Activated naive CD4-positive, alpha-beta T cell treated with anti-CD3 and anti-CD28 coated beads, Interleukin-2, amount 10 ng/mL, durations not matched to agents 7 days and 5 days (primary cell): ENCODE measurements at regions of chr14 and their contacts with region 1.

Region 1: DNA sequence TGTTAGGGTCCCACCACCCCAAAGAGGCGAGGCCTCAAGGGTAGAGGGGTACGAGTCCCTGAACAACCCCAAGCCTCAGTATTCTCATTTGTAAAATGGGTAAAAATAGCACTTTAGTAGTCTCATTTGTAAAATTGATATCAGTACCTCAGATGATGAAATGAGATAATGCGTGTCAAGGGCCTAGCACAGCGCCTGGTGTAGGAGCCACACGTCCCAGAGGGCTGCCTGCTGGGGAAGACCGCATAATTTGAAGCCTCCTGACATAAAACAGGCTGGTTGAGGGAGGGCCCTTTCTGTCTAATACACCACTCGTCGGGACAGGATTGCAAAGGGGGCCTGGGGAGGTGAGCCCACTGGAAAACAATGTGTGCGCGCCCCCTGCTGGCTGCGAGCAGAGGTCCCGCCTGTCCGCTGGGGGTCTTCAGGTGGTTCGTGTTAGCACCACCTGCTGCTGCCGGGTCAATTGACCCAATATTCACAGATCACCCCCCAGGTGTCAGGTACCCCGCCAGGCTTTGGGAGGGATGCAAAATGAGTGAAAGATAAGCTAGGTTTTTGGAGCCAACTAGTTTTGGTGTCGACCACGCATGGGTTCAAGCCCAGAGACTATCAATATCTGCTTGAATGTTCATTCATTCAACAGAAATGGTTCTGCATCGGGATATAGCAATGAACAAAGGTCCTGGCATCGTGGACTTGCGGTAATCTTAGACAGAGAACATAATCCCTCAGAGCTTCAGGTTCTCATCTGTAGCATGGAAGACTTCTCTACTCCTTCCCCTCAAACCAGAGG is 24.7 kb upstream of the IRF2BPL start:
- DNase-seq: peak; percentile 82
- H3K4me3 Mint-ChIP-seq: no peak overlapping the region
- H3K27ac Mint-ChIP-seq: no peak overlapping the region
- H3K4me1 Mint-ChIP-seq: peaks cover 28% of the 10 kb centered on the region
- H3K27me3 Mint-ChIP-seq: no peaks in the 10 kb centered on the region

Region 2: GRCh38 chr14:76882651-76883050 is 170.6 kb before region 1 on chr14:
- CTCF ChIA-PET with region 1: interaction called, 1,049 read pairs
- DNase-seq: no peak
- H3K4me3 Mint-ChIP-seq: no peak overlapping the region
- H3K27ac Mint-ChIP-seq: no peak overlapping the region
- H3K4me1 Mint-ChIP-seq: peaks cover 12% of the 10 kb centered on the region
- H3K27me3 Mint-ChIP-seq: peaks cover 34% of the 10 kb centered on the region

Region 3: DNA sequence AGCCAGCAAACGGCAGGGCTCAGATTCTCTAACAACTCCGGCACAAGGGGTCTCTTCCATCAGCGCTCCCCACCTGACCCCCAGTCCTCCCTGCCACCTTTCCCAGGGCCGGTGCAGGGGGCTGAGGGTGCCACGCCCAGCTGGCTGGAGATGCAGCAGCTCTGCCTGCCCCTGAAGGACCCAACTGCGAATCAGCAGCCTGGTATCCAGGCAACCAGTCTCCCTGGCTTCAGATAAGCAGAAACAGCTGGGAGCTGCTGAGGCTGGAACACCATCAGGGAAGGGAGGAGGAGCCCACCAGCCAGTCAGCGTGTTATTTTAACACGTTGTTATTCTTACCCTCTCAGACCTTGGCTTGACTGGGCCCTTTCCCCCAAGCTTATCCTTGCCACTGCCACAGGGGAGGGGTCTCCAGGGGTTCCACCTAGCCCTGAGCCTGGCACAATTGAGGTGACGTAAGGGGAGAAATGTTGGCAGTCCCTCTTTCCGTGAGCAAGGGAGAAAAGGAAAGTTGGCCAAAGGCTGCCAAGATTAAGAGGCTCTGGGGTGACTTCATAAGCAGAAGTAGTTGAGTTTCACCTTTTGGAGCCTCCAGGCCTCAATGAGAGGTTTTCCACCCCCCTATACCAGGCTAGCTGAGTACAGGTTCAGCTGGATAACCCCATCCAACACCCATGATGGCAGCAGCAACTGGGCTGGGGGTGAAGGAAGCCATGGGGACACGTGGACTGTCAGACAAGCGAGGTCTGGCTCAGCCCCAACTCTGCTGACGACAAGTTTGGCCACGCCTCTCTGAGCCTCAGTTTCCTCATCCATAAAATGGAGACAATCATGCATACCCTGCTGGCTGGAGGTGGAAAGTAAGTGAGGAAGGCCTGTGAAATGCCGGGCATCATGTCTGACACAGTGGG is 115.8 kb before region 1 on chr14:
- CTCF ChIA-PET with region 1: interaction called, 14 read pairs
- DNase-seq: no peak
- H3K4me3 Mint-ChIP-seq: no peak overlapping the region
- H3K27ac Mint-ChIP-seq: no peak overlapping the region
- H3K4me1 Mint-ChIP-seq: peaks cover 25% of the 10 kb centered on the region
- H3K27me3 Mint-ChIP-seq: peaks cover 21% of the 10 kb centered on the region

Region 4: DNA sequence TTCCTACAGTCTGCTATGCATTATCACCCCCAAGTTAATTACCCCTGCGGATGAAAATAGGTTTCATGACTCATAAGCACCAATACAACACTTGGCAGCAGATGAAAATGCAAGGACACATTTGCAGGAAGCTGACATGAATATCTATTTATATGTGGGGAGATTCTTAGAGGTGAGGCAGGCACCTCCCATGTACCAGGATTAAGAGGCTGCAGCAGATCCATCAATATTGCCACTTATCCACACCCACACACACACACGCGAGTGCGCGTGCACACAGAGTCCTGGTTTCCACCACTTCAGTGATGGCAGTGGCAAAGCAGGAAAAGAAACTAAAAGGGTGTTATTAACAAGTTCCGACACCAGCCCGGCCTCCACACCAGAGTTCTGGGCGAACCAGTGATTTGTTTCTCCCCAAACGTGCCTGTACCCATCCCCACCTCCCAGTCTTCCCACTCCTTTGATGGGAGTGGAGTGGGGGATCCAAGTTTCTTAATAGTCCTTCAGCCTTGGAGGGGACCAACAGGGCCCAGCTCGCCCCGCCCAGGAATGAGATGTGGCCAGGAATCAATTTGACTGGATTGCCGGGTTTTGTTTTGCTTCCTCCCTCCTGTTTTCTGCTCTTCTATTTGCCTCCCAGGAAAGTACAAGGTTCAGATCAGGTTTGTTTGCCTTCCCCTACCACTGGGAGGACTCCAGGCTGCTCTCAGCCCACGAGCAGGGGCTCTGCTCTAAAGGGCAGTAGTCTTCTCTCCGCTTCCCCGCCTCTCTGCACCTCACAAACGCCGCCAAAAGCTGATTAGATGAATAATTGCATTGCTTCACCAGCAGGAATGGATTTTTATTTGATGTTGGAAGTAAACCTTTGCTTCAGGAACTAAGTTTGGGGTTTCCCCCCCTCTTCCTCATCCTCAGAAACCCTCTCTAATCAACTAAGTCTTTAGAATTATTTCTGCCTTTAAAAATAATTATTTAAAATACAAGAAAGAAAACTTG is 29.9 kb before region 1 on chr14:
- CTCF ChIA-PET with region 1: interaction called, 16 read pairs
- DNase-seq: no peak
- H3K4me3 Mint-ChIP-seq: peak overlapping the region; percentile 2
- H3K27ac Mint-ChIP-seq: peak overlapping the region; percentile 77
- H3K4me1 Mint-ChIP-seq: peaks cover 52% of the 10 kb centered on the region
- H3K27me3 Mint-ChIP-seq: peaks cover 4% of the 10 kb centered on the region

Region 5: GRCh38 chr14:77040059-77040740 is 13.0 kb before region 1 on chr14:
- CTCF ChIA-PET with region 1: interaction called, 32 read pairs
- DNase-seq: peak; percentile 96
- H3K4me3 Mint-ChIP-seq: peak overlapping the region; percentile 65
- H3K27ac Mint-ChIP-seq: peak overlapping the region; percentile 100
- H3K4me1 Mint-ChIP-seq: peaks cover 94% of the 10 kb centered on the region
- H3K27me3 Mint-ChIP-seq: peaks cover 6% of the 10 kb centered on the region